Activated CD8-positive, alpha-beta T cell treated with anti-CD3 and anti-CD28 coated beads for 36 hours (primary cell): ENCODE measurements at regions of chr14 and their contacts with region 1.

Region 1: GRCh38 chr14:55160989-55161388 is 30.4 kb downstream of the DLGAP5 start:
- DNase-seq: no peak
- ATAC-seq: peak; percentile 76
- H3K4me3 Mint-ChIP-seq: no peak overlapping the region
- H3K27ac Mint-ChIP-seq: no peak overlapping the region
- H3K4me1 Mint-ChIP-seq: no peaks in the 10 kb centered on the region
- H3K27me3 Mint-ChIP-seq: no peaks in the 10 kb centered on the region
- CTCF ChIP-seq: peak; percentile 47

Region 2: DNA sequence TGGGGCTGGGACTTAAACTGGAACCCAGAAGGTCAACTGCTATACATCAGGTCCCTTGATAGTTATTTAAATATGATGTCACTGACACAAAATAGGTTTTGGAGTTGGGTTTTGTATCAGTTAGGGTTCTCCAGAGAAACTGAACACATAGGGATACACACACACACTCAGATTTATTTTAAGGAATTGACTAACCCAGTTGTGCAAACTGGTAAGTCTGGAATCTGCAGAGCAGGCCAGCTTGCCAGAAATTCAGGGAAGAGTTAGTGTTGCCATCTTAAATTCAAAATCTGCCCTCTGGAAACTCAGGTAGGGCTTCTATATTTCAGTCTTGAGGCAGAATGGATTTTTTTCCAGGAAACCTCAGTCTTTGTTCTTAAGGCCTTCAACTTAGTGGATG is 72.6 kb before region 1 on chr14:
- CTCF ChIA-PET with region 1: interaction called, 43 read pairs
- POLR2A ChIA-PET with region 1: no interaction called
- intact Hi-C with region 1: loop called (anchors 2 kb)
- DNase-seq: no peak
- ATAC-seq: no peak
- H3K4me3 Mint-ChIP-seq: no peak overlapping the region
- H3K27ac Mint-ChIP-seq: no peak overlapping the region
- H3K4me1 Mint-ChIP-seq: no peaks in the 10 kb centered on the region
- H3K27me3 Mint-ChIP-seq: no peaks in the 10 kb centered on the region
- CTCF ChIP-seq: no peak

Region 3: GRCh38 chr14:55094321-55095157 is 66.5 kb before region 1 on chr14:
- CTCF ChIA-PET with region 1: interaction called, 43 read pairs
- POLR2A ChIA-PET with region 1: no interaction called
- intact Hi-C with region 1: loop called (anchors 2 kb)
- DNase-seq: no peak
- ATAC-seq: no peak
- H3K4me3 Mint-ChIP-seq: no peak overlapping the region
- H3K27ac Mint-ChIP-seq: no peak overlapping the region
- H3K4me1 Mint-ChIP-seq: peaks cover 20% of the 10 kb centered on the region
- H3K27me3 Mint-ChIP-seq: no peaks in the 10 kb centered on the region
- CTCF ChIP-seq: no peak

Region 4: GRCh38 chr14:55102141-55102621 is 58.8 kb before region 1 on chr14:
- CTCF ChIA-PET with region 1: interaction called, 15 read pairs
- POLR2A ChIA-PET with region 1: no interaction called
- intact Hi-C with region 1: no loop called
- DNase-seq: peak; percentile 82
- ATAC-seq: peak; percentile 67
- H3K4me3 Mint-ChIP-seq: peak overlapping the region; percentile 67
- H3K27ac Mint-ChIP-seq: peak overlapping the region; percentile 99
- H3K4me1 Mint-ChIP-seq: peaks cover 52% of the 10 kb centered on the region
- H3K27me3 Mint-ChIP-seq: no peaks in the 10 kb centered on the region
- CTCF ChIP-seq: no peak

Region 5: DNA sequence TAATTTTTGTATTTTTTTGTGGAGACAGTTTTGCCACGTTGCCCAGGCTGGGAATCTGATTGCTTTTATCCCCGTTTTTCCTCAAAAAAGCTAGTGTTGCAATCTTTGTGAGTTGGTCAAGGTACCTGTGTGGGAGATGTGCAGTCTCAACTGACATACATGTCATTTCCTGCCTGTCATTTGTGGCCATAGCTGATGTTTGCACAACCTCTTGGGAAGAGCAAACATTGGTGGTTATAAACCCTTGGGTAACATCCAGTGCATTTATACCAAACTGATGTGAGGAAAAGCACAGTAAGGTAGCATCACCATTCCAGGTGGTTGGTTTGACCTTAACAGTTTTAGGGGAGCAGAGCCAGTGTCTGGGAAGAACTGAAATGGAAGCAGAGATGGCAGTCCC is 195.9 kb after region 1 on chr14:
- CTCF ChIA-PET with region 1: no interaction called
- POLR2A ChIA-PET with region 1: no interaction called
- intact Hi-C with region 1: no loop called
- DNase-seq: no peak
- ATAC-seq: no peak
- H3K4me3 Mint-ChIP-seq: no peak overlapping the region
- H3K27ac Mint-ChIP-seq: no peak overlapping the region
- H3K4me1 Mint-ChIP-seq: peaks cover 20% of the 10 kb centered on the region
- H3K27me3 Mint-ChIP-seq: no peaks in the 10 kb centered on the region
- CTCF ChIP-seq: no peak